A673 (cell line): ENCODE measurements at regions of chr5 and their contacts with region 1.

Region 1: DNA sequence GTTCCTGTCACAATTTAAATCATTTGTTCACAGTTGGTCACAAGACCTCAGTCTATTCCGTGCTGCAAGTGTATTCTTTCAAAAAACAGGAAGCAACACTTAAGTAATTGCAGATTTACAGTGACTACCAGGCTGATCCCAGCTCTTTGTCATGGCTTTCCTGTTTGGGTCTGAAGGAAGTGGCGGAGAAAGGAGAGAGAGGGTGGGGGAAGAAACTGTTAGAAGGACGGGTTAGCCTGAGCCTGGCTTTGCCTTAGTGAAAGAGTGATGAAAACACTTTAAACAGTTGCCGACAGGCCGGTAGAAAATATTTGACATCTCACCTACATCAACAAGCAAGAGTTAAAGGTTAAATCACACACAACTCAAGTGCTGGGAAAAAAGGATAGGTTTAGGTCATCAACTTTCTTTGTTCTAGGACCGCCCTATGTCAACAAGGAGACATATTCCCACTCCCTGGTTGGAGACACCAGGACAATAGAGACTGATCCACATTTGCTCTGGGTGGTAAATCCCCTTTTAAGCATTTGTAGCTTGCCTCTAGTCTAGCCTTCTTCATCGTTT is 102.2 kb upstream of the DAB2 start:
- DNase-seq: peak; percentile 93
- H3K4me3 ChIP-seq: no peak overlapping the region
- H3K27ac ChIP-seq: peak overlapping the region; percentile 75
- H3K4me1 ChIP-seq: peaks cover 29% of the 10 kb centered on the region
- H3K27me3 ChIP-seq: no peaks in the 10 kb centered on the region
- CTCF ChIP-seq: no peak

Region 2: GRCh38 chr5:39469777-39470415 is 57.1 kb before region 1 on chr5:
- CTCF ChIA-PET with region 1: no interaction called
- POLR2A ChIA-PET with region 1: no interaction called
- intact Hi-C with region 1: loop called (anchors 2 kb)
- DNase-seq: peak; percentile 95
- H3K4me3 ChIP-seq: no peak overlapping the region
- H3K27ac ChIP-seq: peak overlapping the region; percentile 25
- H3K4me1 ChIP-seq: peaks cover 42% of the 10 kb centered on the region
- H3K27me3 ChIP-seq: no peaks in the 10 kb centered on the region
- CTCF ChIP-seq: no peak

Region 3: GRCh38 chr5:39502704-39503103 is 24.3 kb before region 1 on chr5:
- CTCF ChIA-PET with region 1: no interaction called
- POLR2A ChIA-PET with region 1: interaction called, 11 read pairs
- intact Hi-C with region 1: no loop called
- DNase-seq: no peak
- H3K4me3 ChIP-seq: no peak overlapping the region
- H3K27ac ChIP-seq: no peak overlapping the region
- H3K4me1 ChIP-seq: no peaks in the 10 kb centered on the region
- H3K27me3 ChIP-seq: no peaks in the 10 kb centered on the region
- CTCF ChIP-seq: no peak

Region 4: GRCh38 chr5:40198736-40199135 is 671.7 kb after region 1 on chr5:
- CTCF ChIA-PET with region 1: no interaction called
- POLR2A ChIA-PET with region 1: no interaction called
- intact Hi-C with region 1: no loop called
- DNase-seq: peak; percentile 86
- H3K4me3 ChIP-seq: no peak overlapping the region
- H3K27ac ChIP-seq: peak overlapping the region; percentile 67
- H3K4me1 ChIP-seq: peaks cover 27% of the 10 kb centered on the region
- H3K27me3 ChIP-seq: no peaks in the 10 kb centered on the region
- CTCF ChIP-seq: no peak